Activated T-helper 2 cell treated with anti-CD3 and anti-CD28 coated beads, Interferon-gamma antibody, Interleukin-2, Interleukin-4, amounts not matched to agents 10 μg/mL and 5 μg/mL and 100 μg/mL, durations not matched to agents 14 hours and 24 hours and 36 hours (primary cell): ENCODE measurements at regions of chr12 and their contacts with region 1.

Region 1: DNA sequence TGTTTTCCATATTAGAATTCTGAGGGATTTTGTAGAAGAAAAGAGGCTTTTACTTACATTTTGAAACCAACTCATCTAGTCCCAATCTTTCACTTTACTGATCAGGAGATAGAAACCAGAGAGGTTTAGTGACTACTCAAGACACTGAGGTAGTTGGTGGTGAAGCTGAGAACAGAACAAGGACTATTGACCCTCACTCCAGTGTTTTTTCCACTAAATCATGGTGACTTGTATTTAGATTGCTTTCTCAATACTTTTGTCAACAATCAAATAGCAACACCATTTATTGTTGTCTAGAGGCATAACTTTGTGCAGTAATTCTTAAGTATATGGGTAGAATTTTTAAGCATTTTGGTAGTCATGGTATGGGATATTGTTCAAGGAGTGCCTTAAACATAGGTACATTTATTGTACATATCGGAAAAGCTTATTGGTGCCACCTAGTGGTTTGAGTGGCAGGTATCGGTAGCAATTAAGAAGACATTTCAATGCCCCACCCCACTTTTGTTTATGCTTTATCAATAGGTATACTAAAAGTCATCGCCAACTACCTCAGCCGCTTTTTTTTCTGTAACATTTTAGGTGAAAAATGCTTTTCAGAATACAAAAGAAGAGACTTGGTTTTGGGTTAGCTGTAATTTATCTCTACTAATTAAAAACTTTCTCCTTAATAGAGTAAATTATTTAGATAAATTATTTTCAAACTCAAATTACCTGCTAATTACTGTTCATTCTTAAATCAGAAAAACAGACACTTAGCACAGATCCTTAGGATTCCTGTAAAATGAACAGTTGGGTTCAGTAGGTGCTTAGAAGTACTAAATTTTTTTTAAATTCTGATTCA is 47.3 kb upstream of the PAWR start:
- DNase-seq: no peak
- H3K4me3 Mint-ChIP-seq: no peak overlapping the region
- H3K27ac Mint-ChIP-seq: no peak overlapping the region
- H3K4me1 Mint-ChIP-seq: no peaks in the 10 kb centered on the region
- H3K27me3 Mint-ChIP-seq: peaks cover 5% of the 10 kb centered on the region

Region 2: DNA sequence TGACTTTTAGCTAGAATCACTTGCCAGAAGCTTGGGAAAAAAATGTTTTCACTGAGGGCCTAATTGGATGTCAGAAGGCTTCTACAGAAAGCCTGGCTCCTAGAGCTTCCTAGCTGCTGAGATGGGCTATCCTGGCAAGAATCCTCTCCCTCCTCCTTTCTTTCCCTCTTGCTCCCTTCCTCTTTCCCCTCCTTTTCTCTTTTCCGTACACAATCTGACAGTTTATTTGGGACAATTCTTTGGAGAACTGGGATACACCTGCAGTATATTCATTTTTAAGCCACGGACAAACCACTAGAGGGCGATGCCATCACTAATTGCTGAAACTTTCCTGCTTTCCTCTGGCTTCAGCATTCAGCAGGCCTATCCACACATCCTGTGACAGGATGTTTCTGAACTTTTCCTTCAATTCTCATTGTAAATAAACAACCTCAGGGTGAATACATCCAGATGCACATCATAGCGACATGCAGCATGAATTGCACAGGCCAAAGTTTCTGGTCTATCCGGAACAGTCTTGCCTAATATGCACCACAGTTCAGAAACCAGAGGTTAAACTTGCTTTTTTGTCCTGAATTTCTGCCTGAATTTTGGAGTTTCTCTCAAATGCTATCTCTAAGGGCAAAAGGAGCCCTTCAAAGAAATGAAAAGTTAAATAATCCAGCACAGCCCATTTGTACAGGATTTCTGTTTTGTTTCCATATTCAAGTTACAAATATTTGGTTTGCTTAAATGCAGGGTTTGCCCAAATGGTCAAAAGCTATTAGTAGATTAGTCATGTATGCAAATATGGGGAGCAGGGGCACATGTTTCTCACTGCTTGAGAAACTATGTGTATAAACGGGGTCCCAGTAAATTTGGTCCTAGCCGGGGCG is 190.1 kb before region 1 on chr12:
- intact Hi-C with region 1: loop called (anchors 1 kb)
- DNase-seq: no peak
- H3K4me3 Mint-ChIP-seq: no peak overlapping the region
- H3K27ac Mint-ChIP-seq: no peak overlapping the region
- H3K4me1 Mint-ChIP-seq: no peaks in the 10 kb centered on the region
- H3K27me3 Mint-ChIP-seq: no peaks in the 10 kb centered on the region